ENCODE measurements at regions of chrX and their contacts with region 1.

Region 1: DNA sequence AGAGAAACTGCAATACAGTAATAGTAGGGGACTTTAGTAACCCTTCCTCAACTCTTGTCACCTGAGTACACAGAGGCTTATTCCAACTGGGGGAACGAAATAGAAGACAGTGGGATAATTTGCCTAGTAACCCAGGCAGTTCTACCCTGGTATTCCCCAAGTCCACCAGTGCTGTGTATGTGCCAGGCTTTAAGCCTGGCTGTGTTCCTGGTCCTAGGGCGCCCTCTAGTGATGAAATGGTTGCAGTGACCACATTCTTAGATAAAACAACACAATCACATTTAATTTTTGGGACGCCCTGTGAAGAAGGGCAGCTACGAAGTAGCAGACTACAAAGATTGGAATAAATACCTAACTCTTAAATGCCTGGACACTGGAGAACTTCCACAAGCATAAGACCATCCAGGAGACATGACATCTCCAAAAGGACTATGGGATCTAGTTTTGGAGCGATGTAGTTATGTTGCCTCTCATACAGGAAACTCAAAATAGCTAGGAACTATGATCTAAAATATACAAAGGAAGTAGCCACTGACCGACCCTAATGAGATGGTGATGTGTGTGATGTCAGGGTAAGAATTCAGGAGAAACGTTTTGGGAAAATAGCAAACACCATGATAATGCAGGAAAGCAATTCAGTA is 288.5 kb upstream of the ZCCHC13 start:
- DNase-seq: peak; percentile 59
- H3K4me3 ChIP-seq: no peak overlapping the region
- H3K27ac ChIP-seq: no peak overlapping the region
- H3K4me1 ChIP-seq: no peaks in the 10 kb centered on the region
- H3K27me3 ChIP-seq: no peaks in the 10 kb centered on the region
- CTCF ChIP-seq: peak; percentile 86 to 88

Region 2: DNA sequence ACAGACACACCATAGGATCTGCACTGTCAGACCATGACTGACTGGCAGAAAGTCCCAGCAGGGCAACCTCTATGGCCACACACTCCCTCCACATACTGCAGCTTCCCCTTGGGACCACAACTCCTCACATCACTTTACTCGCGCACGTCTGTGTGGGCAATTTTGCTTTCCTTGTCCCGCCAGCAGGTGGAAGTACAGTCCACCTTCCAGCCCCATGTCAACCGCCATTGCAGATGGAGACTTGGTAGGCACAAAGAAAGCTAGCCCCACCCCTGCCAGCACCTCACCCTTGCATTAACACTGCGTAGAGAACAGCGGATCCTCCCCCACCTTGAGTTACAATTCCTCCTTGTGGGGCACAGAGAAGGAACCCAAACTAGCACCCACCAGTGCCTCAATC is 726.5 kb before region 1 on chrX:
- CTCF ChIA-PET with region 1: no interaction called
- dilution Hi-C with region 1: no loop called
- in situ Hi-C with region 1: no loop called
- intact Hi-C with region 1: loop called (anchors 5 kb)
- DNase-seq: no peak
- H3K4me3 ChIP-seq: no peak overlapping the region
- H3K27ac ChIP-seq: no peak overlapping the region
- H3K4me1 ChIP-seq: no peaks in the 10 kb centered on the region
- H3K27me3 ChIP-seq: no peaks in the 10 kb centered on the region
- CTCF ChIP-seq: peak in 1 of 2 donors; percentile 22

Region 3: GRCh38 chrX:73855546-73855945 is 160.0 kb before region 1 on chrX:
- CTCF ChIA-PET with region 1: no interaction called
- dilution Hi-C with region 1: loop called (anchors 10 kb)
- in situ Hi-C with region 1: loop called (anchors 5 kb)
- intact Hi-C with region 1: loop called (anchors 1 kb)
- DNase-seq: peak; percentile 60
- H3K4me3 ChIP-seq: no peak overlapping the region
- H3K27ac ChIP-seq: no peak overlapping the region
- H3K4me1 ChIP-seq: no peaks in the 10 kb centered on the region
- H3K27me3 ChIP-seq: no peaks in the 10 kb centered on the region
- CTCF ChIP-seq: peak; percentile 85 to 88

Region 4: GRCh38 chrX:73943693-73944562 is 71.6 kb before region 1 on chrX:
- CTCF ChIA-PET with region 1: no interaction called
- dilution Hi-C with region 1: no loop called
- in situ Hi-C with region 1: no loop called
- intact Hi-C with region 1: loop called (anchors 2 kb)
- DNase-seq: peak; percentile 86
- H3K4me3 ChIP-seq: peak overlapping the region; percentile 89 to 95 (median 95)
- H3K27ac ChIP-seq: peak overlapping the region; percentile 89
- H3K4me1 ChIP-seq: peaks cover 10% of the 10 kb centered on the region
- H3K27me3 ChIP-seq: no peaks in the 10 kb centered on the region
- CTCF ChIP-seq: no peak

Region 5: GRCh38 chrX:74195605-74196004 is 180.1 kb after region 1 on chrX:
- CTCF ChIA-PET with region 1: no interaction called
- dilution Hi-C with region 1: no loop called
- in situ Hi-C with region 1: no loop called
- intact Hi-C with region 1: no loop called
- DNase-seq: no peak
- H3K4me3 ChIP-seq: no peak overlapping the region
- H3K27ac ChIP-seq: no peak overlapping the region
- H3K4me1 ChIP-seq: no peaks in the 10 kb centered on the region
- H3K27me3 ChIP-seq: peaks cover 4% of the 10 kb centered on the region
- CTCF ChIP-seq: no peak

Region 6: GRCh38 chrX:74343343-74344279 is 328.1 kb after region 1 on chrX:
- CTCF ChIA-PET with region 1: no interaction called
- dilution Hi-C with region 1: no loop called
- in situ Hi-C with region 1: no loop called
- intact Hi-C with region 1: loop called (anchors 10 kb)
- DNase-seq: peak; percentile 92
- H3K4me3 ChIP-seq: no peak overlapping the region
- H3K27ac ChIP-seq: no peak overlapping the region
- H3K4me1 ChIP-seq: no peaks in the 10 kb centered on the region
- H3K27me3 ChIP-seq: no peaks in the 10 kb centered on the region
- CTCF ChIP-seq: peak; percentile 63 to 65

Measured in mammary epithelial cell (primary cell).